ENCODE measurements at regions of chr3 and their contacts with region 1.

Region 1: DNA sequence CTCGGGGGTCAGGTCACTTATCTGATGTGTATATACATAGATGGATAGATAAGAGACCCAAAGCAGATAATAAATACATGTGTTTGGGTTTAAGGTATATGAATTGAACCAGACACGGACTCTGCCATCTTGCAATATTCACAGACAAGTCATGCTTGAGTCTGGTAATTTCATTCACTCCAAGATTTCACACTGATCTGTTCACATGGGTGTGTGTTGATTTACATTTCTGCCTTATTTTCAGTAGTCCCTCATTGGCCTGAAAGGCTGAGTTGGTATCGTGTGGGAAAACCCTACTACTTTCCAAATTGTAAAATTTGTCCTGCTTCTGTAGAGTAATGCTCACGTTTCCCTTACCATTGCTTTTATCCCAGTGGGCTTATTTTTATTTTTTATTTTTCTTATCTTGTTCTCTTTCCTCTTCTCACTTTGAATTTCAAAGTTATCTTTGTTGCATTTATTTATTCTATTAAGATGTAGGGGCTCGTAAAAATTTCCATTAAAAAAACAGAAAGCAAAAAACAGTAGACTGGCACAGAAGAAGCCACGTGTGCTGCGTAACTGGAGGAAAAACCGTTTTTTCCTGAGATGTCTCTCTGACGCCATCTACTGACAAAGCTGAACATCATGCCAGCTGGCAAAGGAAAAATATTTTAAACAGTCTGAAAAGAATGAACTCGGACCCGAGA is 10.8 kb upstream of the MFSD1 start:
- DNase-seq: peak; percentile 46
- H3K4me3 ChIP-seq: peak overlapping the region in 2 of 3 experiments; percentile 2 to 16
- H3K27ac ChIP-seq: no peak overlapping the region
- H3K4me1 ChIP-seq: peaks cover 10% of the 10 kb centered on the region
- H3K27me3 ChIP-seq: no peaks in the 10 kb centered on the region
- CTCF ChIP-seq: peak; percentile 88

Region 2: DNA sequence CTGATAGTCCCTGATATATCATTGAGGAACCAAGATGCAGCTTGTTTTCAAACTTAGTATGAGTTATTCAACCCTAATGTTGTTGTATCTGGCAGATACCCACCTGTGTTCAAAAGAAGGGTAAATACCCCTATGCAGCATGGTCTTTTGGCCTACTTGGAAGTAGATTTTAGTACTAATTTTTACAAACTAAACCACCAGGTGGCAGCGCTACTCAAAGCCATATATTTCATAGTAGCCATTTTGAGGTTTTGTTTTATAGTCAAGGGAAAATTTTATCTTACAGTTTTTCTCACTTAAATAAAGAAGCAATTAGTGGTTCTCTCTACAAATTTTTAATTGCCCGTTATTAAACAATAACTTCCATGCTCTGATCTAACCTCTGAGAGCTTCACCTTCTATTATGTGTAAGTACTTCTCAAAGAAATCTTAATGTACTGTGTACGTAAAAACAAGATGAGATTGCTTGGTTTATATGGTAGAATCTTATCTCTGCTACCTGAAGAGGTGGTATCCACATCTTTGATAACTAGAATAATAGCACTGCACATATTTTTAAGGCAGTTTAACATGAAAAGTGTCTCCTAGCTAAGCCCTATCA is 251.5 kb before region 1 on chr3:
- CTCF ChIA-PET with region 1: interaction called, 3 read pairs
- dilution Hi-C with region 1: no loop called
- in situ Hi-C with region 1: loop called in 1 of 2 experiments (anchors 25 kb)
- intact Hi-C with region 1: no loop called
- DNase-seq: peak; percentile 12
- H3K4me3 ChIP-seq: no peak overlapping the region
- H3K27ac ChIP-seq: no peak overlapping the region
- H3K4me1 ChIP-seq: no peaks in the 10 kb centered on the region
- H3K27me3 ChIP-seq: no peaks in the 10 kb centered on the region
- CTCF ChIP-seq: peak; percentile 51 to 59

Region 3: GRCh38 chr3:158659454-158660237 is 131.4 kb before region 1 on chr3:
- CTCF ChIA-PET with region 1: interaction called, 17 read pairs
- dilution Hi-C with region 1: no loop called
- in situ Hi-C with region 1: loop called (anchors 5 to 10 kb)
- intact Hi-C with region 1: loop called (anchors 1 kb)
- DNase-seq: peak; percentile 51
- H3K4me3 ChIP-seq: no peak overlapping the region
- H3K27ac ChIP-seq: no peak overlapping the region
- H3K4me1 ChIP-seq: no peaks in the 10 kb centered on the region
- H3K27me3 ChIP-seq: no peaks in the 10 kb centered on the region
- CTCF ChIP-seq: peak; percentile 70 to 79

Region 4: DNA sequence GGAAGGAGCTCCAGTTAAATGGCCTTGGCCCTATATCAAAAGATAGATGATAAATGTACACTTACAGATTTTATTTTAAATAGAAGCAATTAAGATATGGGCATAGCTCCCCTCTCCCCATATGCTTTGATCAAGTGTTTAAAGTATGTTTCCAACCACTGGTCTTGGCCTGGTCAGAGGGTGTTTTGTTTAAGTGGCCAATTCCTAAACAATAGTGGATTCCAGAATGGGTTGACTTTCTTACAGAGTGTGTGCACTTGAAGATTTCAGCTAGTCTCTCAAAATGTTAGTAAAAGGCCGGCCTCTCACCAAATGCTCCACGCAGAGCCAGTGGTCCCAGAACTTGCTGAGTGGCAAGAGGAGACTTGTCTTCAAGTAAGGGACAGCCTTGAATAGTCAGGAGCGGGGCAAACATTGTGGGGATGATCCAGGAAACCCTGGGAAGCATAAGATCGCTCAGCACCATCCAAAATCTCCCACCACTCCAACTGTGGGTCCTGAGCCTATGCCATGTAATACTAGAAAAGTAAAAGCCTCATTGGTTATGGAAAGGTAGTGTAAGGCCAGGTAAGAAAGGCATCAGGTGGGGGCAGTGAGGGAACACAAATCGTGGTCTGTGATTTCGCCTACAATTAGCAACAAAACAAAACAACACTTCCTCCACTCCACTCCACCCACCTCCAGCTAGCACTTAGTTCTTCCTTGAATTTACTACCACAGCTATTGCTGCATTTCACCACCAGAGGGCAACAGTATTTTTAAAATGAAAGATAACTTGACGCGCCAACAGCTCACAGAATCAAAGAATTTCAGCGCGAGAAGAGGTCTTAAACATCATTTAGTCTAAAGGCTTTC is 63.6 kb before region 1 on chr3:
- CTCF ChIA-PET with region 1: interaction called, 18 read pairs
- dilution Hi-C with region 1: no loop called
- in situ Hi-C with region 1: loop called (anchors 5 to 10 kb)
- intact Hi-C with region 1: loop called (anchors 1 kb)
- DNase-seq: peak; percentile 58
- H3K4me3 ChIP-seq: no peak overlapping the region
- H3K27ac ChIP-seq: no peak overlapping the region
- H3K4me1 ChIP-seq: peaks cover 33% of the 10 kb centered on the region
- H3K27me3 ChIP-seq: no peaks in the 10 kb centered on the region
- CTCF ChIP-seq: peak; percentile 77 to 95

Region 5: GRCh38 chr3:158918008-158918407 is 127.0 kb after region 1 on chr3:
- CTCF ChIA-PET with region 1: no interaction called
- dilution Hi-C with region 1: no loop called
- in situ Hi-C with region 1: no loop called
- intact Hi-C with region 1: loop called (anchors 2 kb)
- DNase-seq: peak; percentile 61
- H3K4me3 ChIP-seq: no peak overlapping the region
- H3K27ac ChIP-seq: no peak overlapping the region
- H3K4me1 ChIP-seq: no peaks in the 10 kb centered on the region
- H3K27me3 ChIP-seq: no peaks in the 10 kb centered on the region
- CTCF ChIP-seq: peak; percentile 82 to 84